Posterior vena cava (tissue), 2 donors: ENCODE measurements at regions of chr20 and their contacts with region 1.

Region 1: GRCh38 chr20:32681175-32682084 is 7.7 kb upstream of the C20orf203 start:
- DNase-seq: no peak

Region 2: GRCh38 chr20:32762149-32762753 is 80.8 kb after region 1 on chr20 and contains the start of gene DNMT3B:
- intact Hi-C with region 1: loop called in 1 of 2 experiments (anchors 10 kb)
- DNase-seq: peak; percentile 91
- total RNA-seq, gene DNMT3B: 0.38 to 0.56 TPM

Region 3: DNA sequence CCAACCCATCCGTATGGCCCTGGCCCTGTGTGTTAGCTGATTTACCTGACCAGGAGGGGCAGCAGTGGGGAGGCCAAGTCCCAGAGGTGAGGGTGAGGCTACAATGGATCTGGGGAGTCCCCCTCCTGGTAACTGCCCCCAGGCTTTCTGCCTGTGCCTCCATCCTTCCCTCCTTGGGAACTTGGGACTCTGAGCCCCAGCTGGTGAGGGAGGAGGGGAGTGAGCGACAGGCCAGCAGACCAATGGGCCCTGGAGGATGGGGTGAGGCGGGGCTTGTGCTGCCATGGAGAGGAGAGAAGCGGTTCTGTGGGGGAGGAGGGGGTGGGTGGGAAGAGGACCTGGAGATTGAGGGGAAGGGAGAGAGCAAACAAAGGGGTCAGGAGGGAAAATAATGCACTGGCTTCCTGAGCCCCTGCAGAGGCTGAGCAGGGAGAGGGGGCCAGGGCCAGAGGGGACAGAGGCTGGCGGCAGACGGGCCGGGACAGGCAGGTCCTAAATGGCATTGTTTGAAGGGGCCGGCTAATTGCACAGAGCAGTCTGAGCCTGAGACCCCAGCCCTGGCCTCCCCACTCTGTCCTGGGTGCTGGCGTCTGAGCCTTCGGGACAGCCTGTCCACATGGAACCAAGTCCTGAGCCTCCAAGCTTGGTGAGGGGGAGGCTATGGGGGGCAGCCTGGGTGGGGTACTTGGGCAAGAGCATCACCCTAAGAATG is 98.2 kb after region 1 on chr20:
- intact Hi-C with region 1: loop called in 1 of 2 experiments (anchors 5 kb)
- DNase-seq: no peak

Region 4: GRCh38 chr20:33359462-33359861 is 678.0 kb after region 1 on chr20:
- intact Hi-C with region 1: no loop called
- DNase-seq: no peak